Activated CD4-positive, alpha-beta memory T cell treated with anti-CD3 and anti-CD28 coated beads for 36 hours (primary cell): ENCODE measurements at regions of chr5 and their contacts with region 1.

Region 1: GRCh38 chr5:66144074-66144833 is at the start of gene SREK1:
- DNase-seq: peak; percentile 92
- H3K4me3 Mint-ChIP-seq: peak within 1 kb of the TSS; percentile 93
- H3K27ac Mint-ChIP-seq: peak within 1 kb of the TSS; percentile 98
- H3K4me1 Mint-ChIP-seq: peaks cover 51% of the 10 kb centered on the region
- H3K27me3 Mint-ChIP-seq: no peaks in the 10 kb centered on the region
- total RNA-seq, gene SREK1: 50.9 to 54.1 TPM

Region 2: GRCh38 chr5:65562731-65563701 is 581.2 kb before region 1 on chr5 and contains the starts of genes CENPK and PPWD1:
- CTCF ChIA-PET with region 1: no interaction called
- POLR2A ChIA-PET with region 1: interaction called, 3 read pairs
- intact Hi-C with region 1: loop called (anchors 1 kb)
- DNase-seq: peak; percentile 98
- H3K4me3 Mint-ChIP-seq: peak within 1 kb of the TSS; percentile 92
- H3K27ac Mint-ChIP-seq: peak within 1 kb of the TSS; percentile 93
- H3K4me1 Mint-ChIP-seq: peaks cover 45% of the 10 kb centered on the region
- H3K27me3 Mint-ChIP-seq: no peaks in the 10 kb centered on the region
- total RNA-seq, gene CENPK: 79.7 to 87.5 TPM
- total RNA-seq, gene PPWD1: 38.0 to 42.2 TPM

Region 3: DNA sequence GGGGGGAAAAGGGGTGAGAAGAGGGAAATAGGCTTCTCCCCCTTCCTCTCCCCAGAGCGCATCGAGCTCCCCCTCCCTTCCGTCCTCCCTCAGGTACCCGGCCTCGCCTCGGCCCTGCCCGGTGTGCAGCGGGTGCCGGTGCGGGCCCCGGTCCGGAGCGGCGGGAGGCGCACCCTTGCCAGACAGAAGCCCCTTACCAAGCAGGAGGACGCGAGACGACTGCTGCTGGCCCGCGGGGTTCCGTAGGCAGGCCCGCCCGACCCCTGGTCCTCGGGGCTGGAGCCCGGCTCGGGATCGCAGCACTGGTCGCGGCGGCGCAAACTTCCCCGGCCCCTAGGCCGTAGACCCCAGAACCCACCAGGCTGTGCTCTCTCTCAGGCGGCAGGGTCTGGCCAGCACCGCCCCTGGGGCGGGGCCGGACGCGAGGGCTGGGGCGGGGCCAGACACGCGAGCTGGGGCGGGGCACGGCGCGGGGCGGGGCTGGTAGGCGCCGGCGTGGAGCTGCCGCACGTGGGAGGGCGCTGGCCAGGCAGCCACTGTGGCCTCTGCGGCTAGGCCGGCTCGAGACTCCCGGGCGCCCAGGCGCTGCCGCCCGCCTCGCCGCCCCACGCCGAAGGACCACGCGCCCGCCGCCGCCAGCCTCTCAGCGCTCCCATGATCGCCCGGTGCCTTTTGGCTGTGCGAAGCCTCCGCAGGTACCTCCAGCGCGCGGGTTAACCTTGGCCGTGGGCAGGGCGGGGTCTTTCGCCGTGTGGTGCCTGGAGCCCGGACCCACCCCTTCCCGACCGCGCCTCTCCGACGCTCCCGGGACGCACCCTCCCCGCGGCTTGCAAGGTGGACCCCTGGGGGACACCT is 422.3 kb before region 1 on chr5 and contains the starts of genes NLN and SGTB:
- CTCF ChIA-PET with region 1: no interaction called
- POLR2A ChIA-PET with region 1: interaction called, 10 read pairs
- intact Hi-C with region 1: loop called (anchors 1 kb)
- DNase-seq: peak; percentile 88
- H3K4me3 Mint-ChIP-seq: peak within 1 kb of the TSS; percentile 89
- H3K27ac Mint-ChIP-seq: peak within 1 kb of the TSS; percentile 91
- H3K4me1 Mint-ChIP-seq: peaks cover 25% of the 10 kb centered on the region
- H3K27me3 Mint-ChIP-seq: no peaks in the 10 kb centered on the region
- total RNA-seq, gene NLN: 22.7 to 23.7 TPM
- total RNA-seq, gene SGTB: 16.5 to 16.7 TPM

Region 4: GRCh38 chr5:65946198-65946745 is 198.0 kb before region 1 on chr5:
- CTCF ChIA-PET with region 1: no interaction called
- POLR2A ChIA-PET with region 1: no interaction called
- intact Hi-C with region 1: no loop called
- DNase-seq: no peak
- H3K4me3 Mint-ChIP-seq: no peak overlapping the region
- H3K27ac Mint-ChIP-seq: no peak overlapping the region
- H3K4me1 Mint-ChIP-seq: peaks cover 43% of the 10 kb centered on the region
- H3K27me3 Mint-ChIP-seq: no peaks in the 10 kb centered on the region

Region 5: DNA sequence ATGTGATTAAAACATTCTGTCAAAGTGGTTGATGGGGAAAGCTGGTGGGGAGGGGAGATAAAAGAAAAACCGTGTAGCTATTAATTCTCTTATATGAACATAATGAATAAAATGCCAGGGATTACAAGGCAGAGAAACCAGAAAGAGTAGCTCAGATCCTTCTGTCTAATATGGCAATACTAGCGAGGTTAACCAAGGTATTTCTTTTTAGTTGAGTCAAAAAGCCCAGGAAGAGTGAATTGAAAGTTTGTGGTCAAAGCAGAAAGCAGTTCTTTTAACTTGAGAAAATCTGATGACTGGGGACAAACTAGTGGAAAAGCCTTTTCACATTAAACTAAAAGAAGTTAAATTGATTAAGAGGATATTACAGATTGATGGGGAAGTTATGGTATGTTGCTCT is 141.8 kb before region 1 on chr5:
- CTCF ChIA-PET with region 1: no interaction called
- POLR2A ChIA-PET with region 1: no interaction called
- intact Hi-C with region 1: loop called (anchors 5 kb)
- DNase-seq: no peak
- H3K4me3 Mint-ChIP-seq: no peak overlapping the region
- H3K27ac Mint-ChIP-seq: no peak overlapping the region
- H3K4me1 Mint-ChIP-seq: peaks cover 38% of the 10 kb centered on the region
- H3K27me3 Mint-ChIP-seq: no peaks in the 10 kb centered on the region

Region 6: GRCh38 chr5:66171349-66172344 is 27.4 kb after region 1 on chr5:
- CTCF ChIA-PET with region 1: interaction called, 4 read pairs
- POLR2A ChIA-PET with region 1: interaction called, 4 read pairs
- intact Hi-C with region 1: loop called (anchors 1 kb)
- DNase-seq: peak; percentile 48
- H3K4me3 Mint-ChIP-seq: no peak overlapping the region
- H3K27ac Mint-ChIP-seq: no peak overlapping the region
- H3K4me1 Mint-ChIP-seq: peaks cover 29% of the 10 kb centered on the region
- H3K27me3 Mint-ChIP-seq: no peaks in the 10 kb centered on the region

Region 7: GRCh38 chr5:66186108-66186507 is 41.9 kb after region 1 on chr5:
- CTCF ChIA-PET with region 1: no interaction called
- POLR2A ChIA-PET with region 1: no interaction called
- intact Hi-C with region 1: no loop called
- DNase-seq: no peak
- H3K4me3 Mint-ChIP-seq: no peak overlapping the region
- H3K27ac Mint-ChIP-seq: no peak overlapping the region
- H3K4me1 Mint-ChIP-seq: no peaks in the 10 kb centered on the region
- H3K27me3 Mint-ChIP-seq: no peaks in the 10 kb centered on the region

Region 8: GRCh38 chr5:66351813-66352212 is 207.6 kb after region 1 on chr5:
- CTCF ChIA-PET with region 1: no interaction called
- POLR2A ChIA-PET with region 1: no interaction called
- intact Hi-C with region 1: no loop called
- DNase-seq: no peak
- H3K4me3 Mint-ChIP-seq: no peak overlapping the region
- H3K27ac Mint-ChIP-seq: no peak overlapping the region
- H3K4me1 Mint-ChIP-seq: no peaks in the 10 kb centered on the region
- H3K27me3 Mint-ChIP-seq: peaks cover 14% of the 10 kb centered on the region